Activated T-helper 2 cell treated with anti-CD3 and anti-CD28 coated beads, Interferon-gamma antibody, Interleukin-2, Interleukin-4, amounts not matched to agents 10 μg/mL and 5 μg/mL and 100 μg/mL, durations not matched to agents 14 hours and 24 hours and 36 hours (primary cell): ENCODE measurements at regions of chr3 and their contacts with region 1.

Region 1: DNA sequence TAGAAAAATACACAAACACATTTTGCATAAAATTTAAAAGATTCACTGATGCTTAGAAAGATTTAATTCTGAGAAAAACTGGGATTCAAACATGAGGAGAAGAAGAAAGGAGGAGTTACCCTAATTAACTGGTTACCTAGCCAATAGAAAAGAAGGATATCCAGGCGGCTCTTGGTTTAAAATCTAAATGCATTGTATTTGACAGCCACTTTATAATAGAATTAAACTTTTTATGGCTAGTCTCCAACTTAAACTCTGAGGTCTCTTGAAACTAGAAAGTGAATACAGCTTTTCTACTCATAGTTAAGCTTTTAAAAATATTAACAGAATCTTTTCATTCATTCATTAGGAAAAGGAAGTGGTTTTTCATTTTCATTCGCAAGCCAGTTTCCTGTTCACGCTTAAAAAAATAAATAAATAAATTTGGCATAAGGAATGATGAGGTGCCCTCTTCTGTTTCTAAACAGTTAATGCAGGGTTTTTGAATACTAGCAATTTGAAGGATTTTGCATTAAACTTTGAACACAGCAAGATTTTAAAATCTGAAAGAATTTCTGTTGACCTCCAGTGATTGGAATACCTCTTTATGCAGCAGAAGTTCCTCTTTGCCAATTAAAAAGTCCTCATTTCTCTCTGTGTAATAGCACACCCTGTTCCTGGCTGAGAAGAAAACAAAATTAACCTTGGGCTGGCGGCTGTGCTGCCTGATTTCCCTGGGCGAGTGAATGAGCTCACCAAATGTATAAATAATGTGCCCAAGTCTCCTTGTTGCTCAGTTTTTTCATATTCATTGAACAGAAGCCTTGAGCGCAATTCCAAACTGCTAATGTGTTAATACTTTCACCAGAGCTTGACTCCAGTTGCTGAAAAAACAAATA is 105.1 kb downstream of the ZMAT3 start:
- DNase-seq: no peak
- H3K4me3 Mint-ChIP-seq: no peak overlapping the region
- H3K27ac Mint-ChIP-seq: no peak overlapping the region
- H3K4me1 Mint-ChIP-seq: peaks cover 9% of the 10 kb centered on the region
- H3K27me3 Mint-ChIP-seq: peaks cover 8% of the 10 kb centered on the region

Region 2: GRCh38 chr3:178436773-178437172 is 529.8 kb before region 1 on chr3:
- intact Hi-C with region 1: loop called (anchors 2 kb)
- DNase-seq: no peak
- H3K4me3 Mint-ChIP-seq: no peak overlapping the region
- H3K27ac Mint-ChIP-seq: no peak overlapping the region
- H3K4me1 Mint-ChIP-seq: no peaks in the 10 kb centered on the region
- H3K27me3 Mint-ChIP-seq: no peaks in the 10 kb centered on the region